SK-N-SH (cell line): ENCODE measurements at regions of chr2 and their contacts with region 1.

Region 1: GRCh38 chr2:33033606-33034081 is 86.9 kb downstream of the LTBP1 start:
- DNase-seq: peak; percentile 39
- H3K4me3 ChIP-seq: peak overlapping the region; percentile 38 to 46
- H3K27ac ChIP-seq: peak overlapping the region; percentile 35 to 58; a peak in 3 of 4 replicates
- H3K4me1 ChIP-seq: peaks cover 0 to 4% of the 10 kb centered on the region in 2 experiments; a peak in 3 of 4 replicates
- H3K27me3 ChIP-seq: no peaks in the 10 kb centered on the region
- CTCF ChIP-seq: peak; percentile 90
- EP300 ChIP-seq: no peak
- RAD21 ChIP-seq: peak; percentile 79

Region 2: GRCh38 chr2:33021542-33022227 is 12.0 kb before region 1 on chr2:
- CTCF ChIA-PET with region 1: interaction called, 10 read pairs
- POLR2A ChIA-PET with region 1: no interaction called
- DNase-seq: no peak
- H3K4me3 ChIP-seq: peak overlapping the region in 1 of 2 experiments; percentile 4; a peak in 1 of 4 replicates
- H3K27ac ChIP-seq: peak overlapping the region; percentile 70 to 92; a peak in 3 of 4 replicates
- H3K4me1 ChIP-seq: peaks cover 0 to 27% of the 10 kb centered on the region in 2 experiments; a peak in 3 of 4 replicates
- H3K27me3 ChIP-seq: no peaks in the 10 kb centered on the region
- CTCF ChIP-seq: no peak
- EP300 ChIP-seq: peak in 1 of 2 experiments; percentile 61; a peak in 1 of 4 replicates
- RAD21 ChIP-seq: no peak

Region 3: DNA sequence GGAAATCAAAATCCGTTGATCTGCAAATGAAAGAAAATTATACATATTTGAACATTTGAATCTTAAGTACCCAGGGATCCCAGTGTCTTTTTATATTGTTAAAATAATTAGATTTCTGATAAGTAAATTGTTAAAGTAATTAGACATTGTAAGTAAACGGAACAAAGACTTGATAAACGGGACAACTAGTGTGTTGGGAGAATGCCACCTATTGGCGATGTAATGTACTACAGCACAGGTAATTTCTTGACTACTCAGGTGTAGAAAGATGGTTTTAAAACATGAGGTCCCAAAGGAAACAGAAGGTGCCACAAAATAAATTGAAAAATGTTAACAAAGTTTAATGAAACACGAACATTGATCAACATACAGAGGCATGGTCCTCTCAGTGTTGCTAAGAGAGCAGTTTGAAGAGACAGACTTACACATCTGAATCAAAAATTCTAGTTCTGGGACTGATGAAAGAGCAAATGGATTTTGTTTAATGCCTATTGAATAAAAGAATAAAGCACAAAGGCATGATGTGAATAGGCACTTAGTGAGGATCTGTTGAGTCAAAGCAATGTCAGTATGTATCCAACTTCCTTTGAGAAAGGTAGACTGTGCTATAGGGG is 339.4 kb after region 1 on chr2:
- CTCF ChIA-PET with region 1: interaction called, 19 read pairs
- POLR2A ChIA-PET with region 1: no interaction called
- DNase-seq: peak; percentile 49
- H3K4me3 ChIP-seq: no peak overlapping the region
- H3K27ac ChIP-seq: peak overlapping the region in 1 of 2 experiments; percentile 35; a peak in 1 of 4 replicates
- H3K4me1 ChIP-seq: no peaks in the 10 kb centered on the region
- H3K27me3 ChIP-seq: no peaks in the 10 kb centered on the region
- CTCF ChIP-seq: peak; percentile 94
- EP300 ChIP-seq: no peak
- RAD21 ChIP-seq: peak; percentile 83